ENCODE measurements at regions of chr5 and their contacts with region 1.

Region 1: GRCh38 chr5:136080483-136081216 is 51.9 kb downstream of the TGFBI start:
- DNase-seq: peak; percentile 85 to 94
- ATAC-seq: peak; percentile 63 to 94 (median 74)
- H3K4me3 ChIP-seq: peak overlapping the region; percentile 31
- H3K27ac ChIP-seq: peak overlapping the region; percentile 39
- H3K4me1 ChIP-seq: peaks cover 5% of the 10 kb centered on the region
- H3K27me3 ChIP-seq: no peaks in the 10 kb centered on the region
- CTCF ChIP-seq: no peak

Region 2: GRCh38 chr5:136014049-136015002 is 66.3 kb before region 1 on chr5:
- intact Hi-C with region 1: no loop called
- DNase-seq: no peak
- ATAC-seq: no peak
- H3K4me3 ChIP-seq: no peak overlapping the region
- H3K27ac ChIP-seq: no peak overlapping the region
- H3K4me1 ChIP-seq: peaks cover 8% of the 10 kb centered on the region
- H3K27me3 ChIP-seq: no peaks in the 10 kb centered on the region
- CTCF ChIP-seq: no peak

Region 3: GRCh38 chr5:136132557-136133221 is 52.0 kb after region 1 on chr5 and contains the start of gene SMAD5:
- intact Hi-C with region 1: loop called in 1 of 2 experiments (anchors 1 kb)
- DNase-seq: peak; percentile 97 to 98
- ATAC-seq: peak; percentile 99
- H3K4me3 ChIP-seq: peak within 1 kb of the TSS; percentile 91
- H3K27ac ChIP-seq: peak within 1 kb of the TSS; percentile 93
- H3K4me1 ChIP-seq: peaks cover 36% of the 10 kb centered on the region
- H3K27me3 ChIP-seq: no peaks in the 10 kb centered on the region
- CTCF ChIP-seq: no peak
- total RNA-seq, gene SMAD5: 35.8 to 49.6 (median 39.8) TPM

Region 4: DNA sequence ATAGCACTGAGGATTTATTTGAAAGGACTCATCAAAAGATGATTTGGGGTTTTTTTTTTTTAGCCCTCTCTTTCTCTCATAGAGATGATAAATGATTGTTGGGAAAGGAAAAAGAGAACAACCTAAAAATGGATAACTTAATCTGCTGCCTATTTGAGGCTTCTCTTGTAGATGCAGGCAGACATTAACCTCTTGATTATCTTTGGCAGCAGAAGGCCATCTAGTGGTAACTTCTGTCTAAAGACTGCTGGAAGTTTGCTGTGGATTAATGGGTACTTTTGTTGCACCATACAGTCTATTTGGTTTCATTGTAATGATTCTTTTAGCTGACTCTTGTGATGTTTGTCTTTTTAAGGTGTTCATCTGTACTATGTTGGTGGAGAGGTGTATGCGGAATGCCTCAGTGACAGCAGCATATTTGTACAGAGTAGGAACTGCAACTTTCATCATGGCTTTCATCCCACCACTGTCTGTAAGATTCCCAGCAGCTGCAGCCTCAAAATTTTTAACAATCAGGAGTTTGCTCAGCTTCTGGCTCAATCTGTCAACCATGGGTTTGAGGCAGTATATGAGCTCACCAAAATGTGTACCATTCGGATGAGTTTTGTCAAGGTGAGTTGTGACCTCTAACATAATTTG is 93.5 kb after region 1 on chr5:
- intact Hi-C with region 1: loop called in 1 of 2 experiments (anchors 5 kb)
- DNase-seq: no peak
- ATAC-seq: peak in 3 of 4 donors; percentile 22 to 81 (median 72)
- H3K4me3 ChIP-seq: no peak overlapping the region
- H3K27ac ChIP-seq: no peak overlapping the region
- H3K4me1 ChIP-seq: no peaks in the 10 kb centered on the region
- H3K27me3 ChIP-seq: no peaks in the 10 kb centered on the region
- CTCF ChIP-seq: peak; percentile 55